Ovary (tissue), 10 donors: ENCODE measurements at regions of chr6 and their contacts with region 1.

Region 1: GRCh38 chr6:157314705-157315321 is 8.5 kb downstream of the TMEM242 start:
- DNase-seq: no peak
- H3K4me3 ChIP-seq: no peak overlapping the region
- H3K27ac ChIP-seq: no peak overlapping the region
- H3K4me1 ChIP-seq: no peaks in the 10 kb centered on the region
- H3K27me3 ChIP-seq: no peaks in the 10 kb centered on the region
- CTCF ChIP-seq: peak; percentile 30 to 90 (median 88)
- EP300 ChIP-seq: no peak
- POLR2A ChIP-seq: no peak

Region 2: GRCh38 chr6:156933201-156934068 is 381.4 kb before region 1 on chr6:
- intact Hi-C with region 1: no loop called
- DNase-seq: no peak
- H3K4me3 ChIP-seq: no peak overlapping the region
- H3K27ac ChIP-seq: peak overlapping the region in 1 of 2 donors; percentile 3
- H3K4me1 ChIP-seq: peaks cover 7% of the 10 kb centered on the region
- H3K27me3 ChIP-seq: no peaks in the 10 kb centered on the region
- CTCF ChIP-seq: no peak
- EP300 ChIP-seq: no peak
- POLR2A ChIP-seq: no peak

Region 3: DNA sequence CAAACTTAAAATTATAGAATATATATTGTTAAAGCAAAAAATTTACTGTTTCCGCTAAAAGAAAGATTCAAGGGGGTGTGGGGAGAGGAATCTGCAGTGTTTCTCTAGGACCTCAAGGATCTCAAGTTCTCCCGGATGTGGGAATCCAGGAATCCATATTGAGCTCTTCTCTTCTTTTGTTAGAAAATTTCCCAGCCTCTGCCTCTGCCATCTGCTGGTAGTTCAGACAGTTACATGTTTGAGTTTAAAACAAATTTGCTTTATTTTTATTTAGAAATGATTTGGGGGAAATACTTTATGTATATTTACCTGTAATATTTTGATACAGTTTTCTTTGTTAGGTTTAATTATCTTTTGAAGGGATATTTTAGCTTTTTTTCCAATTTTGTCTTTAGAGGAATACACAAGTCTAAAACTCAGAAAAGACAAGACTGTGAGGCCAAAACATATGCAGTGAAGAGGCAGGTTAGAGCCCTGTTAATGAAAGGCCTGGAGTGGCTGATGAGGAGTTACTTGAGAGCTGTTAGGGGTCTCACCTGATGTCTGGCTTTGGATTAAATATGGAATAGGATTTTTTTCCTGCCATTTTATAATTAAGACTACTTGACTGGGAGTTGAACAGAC is 268.9 kb before region 1 on chr6:
- intact Hi-C with region 1: no loop called
- DNase-seq: no peak
- H3K4me3 ChIP-seq: no peak overlapping the region
- H3K27ac ChIP-seq: no peak overlapping the region
- H3K4me1 ChIP-seq: peaks cover 8% of the 10 kb centered on the region
- H3K27me3 ChIP-seq: no peaks in the 10 kb centered on the region
- CTCF ChIP-seq: peak; percentile 23 to 26 (median 26)
- EP300 ChIP-seq: no peak
- POLR2A ChIP-seq: no peak

Region 4: DNA sequence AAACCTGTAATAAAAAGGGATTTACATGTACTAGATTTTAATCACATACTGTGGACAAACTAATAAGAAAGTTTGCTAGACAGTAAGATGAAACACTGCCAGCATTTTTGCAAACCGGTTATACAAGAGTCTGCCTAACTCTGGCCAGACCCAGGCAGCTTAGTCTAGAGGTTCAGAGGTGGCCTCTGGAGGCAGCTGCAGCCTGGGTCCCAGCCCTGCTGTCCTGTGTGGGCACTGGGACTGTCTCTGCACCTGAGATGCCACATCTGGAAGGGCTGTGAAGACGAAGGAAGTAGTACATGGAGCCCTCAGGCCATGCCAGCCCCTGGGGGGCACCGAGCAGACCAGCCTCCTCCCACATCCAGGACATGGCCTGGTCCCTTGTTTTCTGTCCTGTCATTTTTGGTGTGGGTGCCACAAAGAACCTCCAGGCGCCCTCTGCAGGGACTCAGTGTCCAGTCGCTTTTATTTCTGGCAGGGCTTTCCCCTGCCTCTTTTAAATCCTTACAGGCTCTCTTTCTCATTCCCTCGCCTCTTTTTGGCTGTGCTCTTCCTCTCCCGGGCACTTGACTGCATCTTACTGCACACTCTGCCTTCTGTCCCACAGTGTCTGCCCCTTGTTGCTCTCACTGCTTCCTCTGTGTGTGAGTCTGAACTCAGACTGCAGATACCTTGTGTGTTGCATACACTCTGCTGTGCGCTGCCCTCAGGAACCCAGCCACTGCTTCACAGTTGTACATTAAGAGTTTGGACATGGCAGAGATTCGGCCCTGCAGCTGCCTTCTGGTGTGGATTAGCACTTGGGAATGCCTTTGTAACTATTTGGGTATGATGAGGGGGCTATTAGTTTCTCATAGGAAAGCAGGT is 282.9 kb after region 1 on chr6:
- intact Hi-C with region 1: loop called in 1 of 4 experiments (anchors 10 kb)
- DNase-seq: peak in 1 of 5 donors; percentile 37
- H3K4me3 ChIP-seq: no peak overlapping the region
- H3K27ac ChIP-seq: no peak overlapping the region
- H3K4me1 ChIP-seq: no peaks in the 10 kb centered on the region
- H3K27me3 ChIP-seq: no peaks in the 10 kb centered on the region
- CTCF ChIP-seq: no peak
- EP300 ChIP-seq: no peak
- POLR2A ChIP-seq: no peak

Region 5: DNA sequence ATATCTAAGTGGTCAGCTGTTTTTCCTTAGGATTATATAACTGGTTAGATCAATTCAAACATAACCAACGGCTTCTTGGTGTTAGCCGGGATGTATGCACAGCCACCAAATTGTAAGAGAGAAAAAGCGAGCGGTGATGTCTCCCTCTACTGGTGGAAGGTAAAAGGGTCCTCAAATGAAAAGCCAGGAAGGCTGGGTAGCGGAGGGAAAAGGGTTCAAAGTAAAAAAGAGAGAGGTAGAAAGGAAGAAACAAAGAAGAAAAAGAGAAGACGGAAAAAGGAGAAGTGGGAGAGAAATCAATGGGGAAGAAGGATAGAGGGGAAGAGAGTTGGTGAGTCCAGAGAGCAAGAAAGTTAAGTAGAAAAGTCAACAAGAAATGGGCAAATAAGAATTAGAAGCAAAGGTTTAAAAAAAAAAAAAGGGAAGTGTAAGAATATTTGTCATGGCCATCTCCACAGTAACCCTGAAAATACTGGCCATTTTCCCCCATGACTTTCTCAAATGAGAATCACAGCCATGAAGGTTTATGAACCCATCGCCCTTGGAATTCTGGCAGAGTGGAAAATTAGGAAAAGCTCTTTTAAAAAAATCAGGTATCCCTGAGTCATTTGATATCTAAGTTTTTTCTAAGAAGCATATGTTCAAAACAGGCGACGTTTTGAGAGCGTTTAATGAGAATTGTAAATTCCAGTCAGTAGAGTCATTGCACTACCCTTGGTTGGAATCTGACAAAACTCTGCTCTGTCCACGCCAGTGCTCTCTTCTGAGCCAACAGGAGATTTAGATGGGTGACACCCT is 352.6 kb after region 1 on chr6:
- intact Hi-C with region 1: loop called in 3 of 4 experiments (anchors 5 to 10 kb)
- DNase-seq: peak in 2 of 5 donors; percentile 49 to 65
- H3K4me3 ChIP-seq: no peak overlapping the region
- H3K27ac ChIP-seq: no peak overlapping the region
- H3K4me1 ChIP-seq: peaks cover 9% of the 10 kb centered on the region
- H3K27me3 ChIP-seq: no peaks in the 10 kb centered on the region
- CTCF ChIP-seq: peak; percentile 58 to 66 (median 64)
- EP300 ChIP-seq: no peak
- POLR2A ChIP-seq: no peak